ENCODE measurements at regions of chr14 and their contacts with region 1.

Region 1: DNA sequence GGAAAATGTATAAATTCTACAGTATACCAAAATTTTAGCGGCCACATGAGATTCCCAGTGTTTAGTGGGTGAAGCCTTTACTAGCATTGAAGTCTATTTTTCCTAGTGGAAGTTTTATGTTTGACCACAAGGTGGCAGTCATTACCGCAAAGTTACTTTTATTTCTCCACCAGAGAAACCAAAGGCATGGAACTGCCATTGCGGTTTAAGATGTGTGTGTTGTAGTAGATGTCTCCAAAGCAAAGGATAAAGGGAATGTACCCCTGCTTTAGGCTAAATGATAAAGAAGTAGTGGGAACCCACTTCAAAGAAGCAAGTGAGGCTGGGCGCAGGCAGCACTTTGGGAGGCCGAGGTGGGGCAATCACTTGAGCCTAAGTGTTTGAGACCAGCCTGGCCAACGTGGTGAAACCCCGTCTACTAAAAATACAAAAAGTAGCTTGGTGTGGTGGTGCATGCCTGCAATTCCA is 140.5 kb downstream of the PRKCH start:
- DNase-seq: peak; percentile 62
- ATAC-seq: peak; percentile 55
- H3K4me3 Mint-ChIP-seq: peak overlapping the region; percentile 3
- H3K27ac Mint-ChIP-seq: peak overlapping the region; percentile 91
- H3K4me1 Mint-ChIP-seq: peaks cover 71% of the 10 kb centered on the region
- H3K27me3 Mint-ChIP-seq: no peaks in the 10 kb centered on the region

Region 2: GRCh38 chr14:61296719-61297502 is 164.9 kb before region 1 on chr14:
- CTCF ChIA-PET with region 1: interaction called, 10 read pairs
- POLR2A ChIA-PET with region 1: interaction called, 3 read pairs
- DNase-seq: peak; percentile 50
- ATAC-seq: peak; percentile 50
- H3K4me3 Mint-ChIP-seq: peak overlapping the region; percentile 53
- H3K27ac Mint-ChIP-seq: no peak overlapping the region
- H3K4me1 Mint-ChIP-seq: peaks cover 47% of the 10 kb centered on the region
- H3K27me3 Mint-ChIP-seq: no peaks in the 10 kb centered on the region

Region 3: GRCh38 chr14:61730756-61731373 is 269.0 kb after region 1 on chr14:
- CTCF ChIA-PET with region 1: interaction called, 10 read pairs
- POLR2A ChIA-PET with region 1: no interaction called
- DNase-seq: no peak
- ATAC-seq: no peak
- H3K4me3 Mint-ChIP-seq: no peak overlapping the region
- H3K27ac Mint-ChIP-seq: no peak overlapping the region
- H3K4me1 Mint-ChIP-seq: peaks cover 40% of the 10 kb centered on the region
- H3K27me3 Mint-ChIP-seq: no peaks in the 10 kb centered on the region

Measured in activated CD8-positive, alpha-beta T cell treated with anti-CD3 and anti-CD28 coated beads, Interleukin-2, amount 10 ng/mL, durations not matched to agents 7 days and 5 days (primary cell).